HEK293T (cell line): ENCODE measurements at regions of chr5 and their contacts with region 1.

Region 1: GRCh38 chr5:138503487-138504270 is 38.4 kb downstream of the EGR1 start:
- DNase-seq: peak; percentile 69

Region 2: DNA sequence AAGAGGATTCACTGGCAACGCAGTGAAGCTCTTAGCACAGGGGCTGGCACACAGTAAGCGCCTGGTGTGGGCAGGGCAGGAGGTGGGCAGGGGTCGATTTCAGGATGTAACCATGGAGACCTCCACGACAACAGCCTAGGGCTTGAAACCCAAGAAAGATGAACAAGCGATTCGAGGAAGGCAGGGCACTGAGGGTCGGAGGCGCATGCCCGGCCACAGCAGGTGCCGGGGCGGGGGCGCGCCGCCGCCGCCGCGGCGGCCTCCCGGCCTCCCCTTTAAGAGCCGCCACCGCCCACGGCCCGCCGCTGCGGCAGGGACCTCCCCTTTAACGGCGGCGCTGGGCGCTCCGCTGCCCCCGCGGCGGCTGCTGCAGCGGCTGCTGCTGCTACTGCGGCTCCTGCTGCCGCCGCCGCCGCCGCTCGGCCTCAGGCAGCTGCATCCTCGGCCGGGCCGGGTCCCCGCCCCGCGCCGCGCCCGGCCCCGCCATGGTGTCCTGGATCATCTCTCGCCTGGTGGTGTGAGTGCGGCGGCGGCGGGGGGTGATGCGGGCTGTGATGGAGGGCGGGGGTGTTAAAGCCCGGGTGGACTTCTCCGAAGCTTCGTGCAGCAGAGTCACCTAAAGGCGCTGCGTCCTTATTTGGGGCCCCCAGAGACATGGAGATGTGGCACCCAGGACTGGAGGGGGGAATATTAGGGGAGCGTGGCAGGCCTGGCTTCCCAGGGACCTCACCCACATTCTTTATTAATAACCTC is 64.8 kb before region 1 on chr5 and contains the start of gene REEP2:
- CTCF ChIA-PET with region 1: interaction called, 10 read pairs
- POLR2A ChIA-PET with region 1: no interaction called
- DNase-seq: peak; percentile 82

Region 3: DNA sequence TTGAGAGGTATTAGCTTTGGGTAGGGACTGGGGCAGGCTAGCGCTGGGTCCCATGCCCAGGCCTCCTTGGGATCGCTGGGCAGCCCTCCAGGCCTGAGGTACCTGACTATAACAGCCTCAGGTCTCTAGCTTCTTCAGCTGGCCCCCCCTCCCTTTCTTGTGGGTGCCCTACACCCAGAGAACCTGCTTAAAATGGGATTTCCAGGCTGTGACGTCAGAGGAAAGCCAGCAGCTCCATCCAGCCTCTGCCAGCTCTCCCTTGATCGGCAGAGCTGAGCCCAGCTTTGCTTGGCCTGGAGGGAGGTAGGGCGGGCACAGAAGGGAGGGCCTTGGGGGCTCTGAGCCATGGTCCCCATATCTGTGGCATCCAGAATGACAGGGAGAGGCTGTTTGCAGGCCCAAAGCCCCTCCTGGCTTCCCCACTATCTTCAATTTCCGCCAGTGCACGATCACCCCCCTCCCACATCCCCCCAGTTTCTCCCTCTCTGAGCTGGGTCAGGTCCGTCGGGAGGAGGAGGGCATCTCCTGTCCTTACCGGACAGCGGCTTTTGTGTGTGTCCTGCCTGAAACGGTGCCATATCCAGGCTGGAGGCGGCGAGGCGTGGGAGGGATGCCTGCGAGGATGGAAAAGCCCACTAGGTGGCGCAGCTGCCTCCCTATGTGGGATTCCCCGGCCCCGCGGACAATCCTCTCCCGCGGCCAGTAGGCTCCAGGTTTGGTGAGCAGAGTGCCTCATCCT is 54.0 kb before region 1 on chr5:
- CTCF ChIA-PET with region 1: interaction called, 115 read pairs
- POLR2A ChIA-PET with region 1: interaction called, 11 read pairs
- DNase-seq: peak; percentile 95

Region 4: GRCh38 chr5:138458384-138458783 is 45.3 kb before region 1 on chr5:
- CTCF ChIA-PET with region 1: interaction called, 115 read pairs
- POLR2A ChIA-PET with region 1: interaction called, 31 read pairs
- DNase-seq: no peak

Region 5: GRCh38 chr5:138464008-138464387 is 39.7 kb before region 1 on chr5:
- CTCF ChIA-PET with region 1: interaction called, 40 read pairs
- POLR2A ChIA-PET with region 1: interaction called, 31 read pairs
- DNase-seq: peak; percentile 92

Region 6: GRCh38 chr5:138491669-138492559 is 11.8 kb before region 1 on chr5:
- CTCF ChIA-PET with region 1: interaction called, 16 read pairs
- POLR2A ChIA-PET with region 1: interaction called, 13 read pairs
- DNase-seq: peak; percentile 84

Region 7: DNA sequence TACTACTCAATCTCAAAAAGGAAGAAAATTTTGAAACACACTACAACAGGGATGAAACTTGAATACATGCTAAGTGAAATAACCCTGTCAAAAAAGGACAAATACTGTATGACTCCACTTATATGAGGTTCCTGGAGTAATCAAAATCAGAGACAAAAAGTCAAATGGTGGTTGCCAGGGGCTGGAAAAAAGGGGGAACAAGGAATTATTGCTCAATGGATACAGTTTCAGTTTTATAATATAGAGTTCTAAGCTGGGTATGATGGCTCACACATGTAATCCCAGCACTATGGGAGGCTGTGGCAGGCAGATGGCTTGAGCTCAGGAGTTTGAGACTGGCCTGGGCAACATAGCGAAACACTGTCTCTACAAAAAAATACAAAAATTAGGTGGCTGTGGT is 10.3 kb after region 1 on chr5:
- CTCF ChIA-PET with region 1: interaction called, 15 read pairs
- POLR2A ChIA-PET with region 1: no interaction called
- DNase-seq: no peak